ENCODE measurements at regions of chr12 and their contacts with region 1.

Region 1: GRCh38 chr12:116599285-116600136 is 40.3 kb downstream of the MAP1LC3B2 start:
- DNase-seq: peak; percentile 74
- H3K4me3 Mint-ChIP-seq: no peak overlapping the region
- H3K27ac Mint-ChIP-seq: no peak overlapping the region
- H3K4me1 Mint-ChIP-seq: peaks cover 16% of the 10 kb centered on the region
- H3K27me3 Mint-ChIP-seq: no peaks in the 10 kb centered on the region

Region 2: GRCh38 chr12:115998119-115998633 is 601.3 kb before region 1 on chr12:
- CTCF ChIA-PET with region 1: interaction called, 15 read pairs
- POLR2A ChIA-PET with region 1: no interaction called
- intact Hi-C with region 1: loop called (anchors 2 kb)
- DNase-seq: peak; percentile 13
- H3K4me3 Mint-ChIP-seq: no peak overlapping the region
- H3K27ac Mint-ChIP-seq: no peak overlapping the region
- H3K4me1 Mint-ChIP-seq: peaks cover 4% of the 10 kb centered on the region
- H3K27me3 Mint-ChIP-seq: no peaks in the 10 kb centered on the region

Region 3: GRCh38 chr12:116142936-116143898 is 456.3 kb before region 1 on chr12:
- CTCF ChIA-PET with region 1: interaction called, 18 read pairs
- POLR2A ChIA-PET with region 1: no interaction called
- intact Hi-C with region 1: loop called (anchors 5 kb)
- DNase-seq: no peak
- H3K4me3 Mint-ChIP-seq: no peak overlapping the region
- H3K27ac Mint-ChIP-seq: peak overlapping the region; percentile 42
- H3K4me1 Mint-ChIP-seq: peaks cover 51% of the 10 kb centered on the region
- H3K27me3 Mint-ChIP-seq: no peaks in the 10 kb centered on the region

Region 4: GRCh38 chr12:116441292-116441691 is 158.2 kb before region 1 on chr12:
- CTCF ChIA-PET with region 1: no interaction called
- POLR2A ChIA-PET with region 1: no interaction called
- intact Hi-C with region 1: loop called (anchors 10 kb)
- DNase-seq: no peak
- H3K4me3 Mint-ChIP-seq: no peak overlapping the region
- H3K27ac Mint-ChIP-seq: no peak overlapping the region
- H3K4me1 Mint-ChIP-seq: peaks cover 8% of the 10 kb centered on the region
- H3K27me3 Mint-ChIP-seq: no peaks in the 10 kb centered on the region

Region 5: GRCh38 chr12:116533343-116534251 is 65.9 kb before region 1 on chr12:
- CTCF ChIA-PET with region 1: no interaction called
- POLR2A ChIA-PET with region 1: no interaction called
- intact Hi-C with region 1: loop called (anchors 10 kb)
- DNase-seq: peak; percentile 84
- H3K4me3 Mint-ChIP-seq: peak overlapping the region; percentile 78
- H3K27ac Mint-ChIP-seq: no peak overlapping the region
- H3K4me1 Mint-ChIP-seq: peaks cover 24% of the 10 kb centered on the region
- H3K27me3 Mint-ChIP-seq: no peaks in the 10 kb centered on the region

Region 6: GRCh38 chr12:116656306-116656705 is 56.8 kb after region 1 on chr12:
- CTCF ChIA-PET with region 1: no interaction called
- POLR2A ChIA-PET with region 1: no interaction called
- intact Hi-C with region 1: no loop called
- DNase-seq: no peak
- H3K4me3 Mint-ChIP-seq: no peak overlapping the region
- H3K27ac Mint-ChIP-seq: no peak overlapping the region
- H3K4me1 Mint-ChIP-seq: no peaks in the 10 kb centered on the region
- H3K27me3 Mint-ChIP-seq: peaks cover 21% of the 10 kb centered on the region

Region 7: DNA sequence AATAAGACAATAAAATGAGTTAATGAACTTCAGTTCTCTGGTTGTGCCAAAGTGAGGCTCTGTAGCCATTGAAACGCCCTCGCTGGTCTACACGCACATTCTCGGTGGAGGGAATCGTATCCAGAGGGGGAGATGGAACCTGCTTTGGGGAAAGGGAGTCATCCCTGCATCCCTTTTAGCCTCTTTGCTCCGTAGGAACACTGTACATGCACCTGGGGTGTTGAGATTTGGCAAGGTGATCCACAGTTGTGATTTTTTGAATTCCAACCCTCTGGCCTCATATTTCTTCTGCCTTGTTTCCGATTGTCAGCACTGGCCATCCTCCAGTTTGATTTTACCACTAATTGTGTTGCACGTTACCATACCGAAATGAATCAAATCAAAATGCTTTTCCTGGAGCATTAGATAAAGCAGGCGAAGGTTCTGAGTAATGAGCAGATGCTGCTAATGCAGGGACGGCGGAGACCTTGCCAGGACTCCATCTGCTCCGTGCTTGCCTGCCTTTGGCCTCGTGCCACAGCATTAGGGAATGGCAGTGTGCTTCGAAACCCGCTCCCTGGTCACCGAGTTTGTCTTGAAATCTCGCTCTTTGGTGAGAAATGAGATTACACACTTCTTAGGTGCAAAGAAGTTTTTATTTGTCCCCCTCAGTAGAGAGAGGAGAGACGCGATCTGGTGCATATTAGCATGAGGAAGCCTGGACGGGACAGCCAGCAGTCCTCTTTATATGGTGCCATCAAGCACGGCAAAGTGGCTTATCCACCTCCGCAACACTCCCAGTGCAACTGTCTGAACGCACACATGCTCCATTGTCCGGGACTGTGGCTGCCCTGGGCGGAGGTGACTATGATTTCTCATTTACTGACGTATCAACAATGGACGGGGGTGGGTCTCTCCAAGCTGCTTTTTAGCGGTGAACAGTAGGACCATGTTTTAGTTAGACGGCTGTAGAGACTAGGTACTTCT is 370.4 kb after region 1 on chr12:
- CTCF ChIA-PET with region 1: no interaction called
- POLR2A ChIA-PET with region 1: no interaction called
- intact Hi-C with region 1: no loop called
- DNase-seq: no peak
- H3K4me3 Mint-ChIP-seq: no peak overlapping the region
- H3K27ac Mint-ChIP-seq: no peak overlapping the region
- H3K4me1 Mint-ChIP-seq: no peaks in the 10 kb centered on the region
- H3K27me3 Mint-ChIP-seq: no peaks in the 10 kb centered on the region

Measured in activated CD4-positive, alpha-beta memory T cell treated with anti-CD3 and anti-CD28 coated beads for 36 hours (primary cell).